Caco-2 (cell line): ENCODE measurements at regions of chr14 and their contacts with region 1.

Region 1: GRCh38 chr14:66918527-66918926 is 270.7 kb upstream of the GARIN2 start:
- DNase-seq: peak; percentile 40 to 50
- H3K4me3 ChIP-seq: no peak overlapping the region
- H3K4me3 Mint-ChIP-seq: no peak overlapping the region
- H3K27ac Mint-ChIP-seq: no peak overlapping the region
- H3K4me1 ChIP-seq: peaks cover 26% of the 10 kb centered on the region
- H3K4me1 Mint-ChIP-seq: peaks cover 16% of the 10 kb centered on the region
- H3K27me3 ChIP-seq: no peaks in the 10 kb centered on the region
- H3K27me3 Mint-ChIP-seq: no peaks in the 10 kb centered on the region
- CTCF ChIP-seq: no peak

Region 2: GRCh38 chr14:66152747-66153146 is 765.8 kb before region 1 on chr14:
- CTCF ChIA-PET with region 1: no interaction called
- POLR2A ChIA-PET with region 1: no interaction called
- intact Hi-C with region 1: no loop called
- DNase-seq: no peak
- H3K4me3 ChIP-seq: no peak overlapping the region
- H3K4me3 Mint-ChIP-seq: no peak overlapping the region
- H3K27ac Mint-ChIP-seq: no peak overlapping the region
- H3K4me1 ChIP-seq: no peaks in the 10 kb centered on the region
- H3K4me1 Mint-ChIP-seq: no peaks in the 10 kb centered on the region
- H3K27me3 ChIP-seq: no peaks in the 10 kb centered on the region
- H3K27me3 Mint-ChIP-seq: peaks cover 3% of the 10 kb centered on the region
- CTCF ChIP-seq: no peak

Region 3: GRCh38 chr14:66859063-66859671 is 59.4 kb before region 1 on chr14:
- CTCF ChIA-PET with region 1: no interaction called
- POLR2A ChIA-PET with region 1: no interaction called
- intact Hi-C with region 1: loop called (anchors 1 kb)
- DNase-seq: peak; percentile 55 to 74
- H3K4me3 ChIP-seq: no peak overlapping the region
- H3K4me3 Mint-ChIP-seq: peak overlapping the region; percentile 27
- H3K27ac Mint-ChIP-seq: peak overlapping the region; percentile 12
- H3K4me1 ChIP-seq: peaks cover 20% of the 10 kb centered on the region
- H3K4me1 Mint-ChIP-seq: peaks cover 19% of the 10 kb centered on the region
- H3K27me3 ChIP-seq: no peaks in the 10 kb centered on the region
- H3K27me3 Mint-ChIP-seq: no peaks in the 10 kb centered on the region
- CTCF ChIP-seq: no peak

Region 4: GRCh38 chr14:66932793-66933108 is 14.2 kb after region 1 on chr14:
- CTCF ChIA-PET with region 1: interaction called, 5 read pairs
- POLR2A ChIA-PET with region 1: no interaction called
- intact Hi-C with region 1: loop called (anchors 2 kb)
- DNase-seq: no peak
- H3K4me3 ChIP-seq: no peak overlapping the region
- H3K4me3 Mint-ChIP-seq: no peak overlapping the region
- H3K27ac Mint-ChIP-seq: peak overlapping the region; percentile 63
- H3K4me1 ChIP-seq: peaks cover 17% of the 10 kb centered on the region
- H3K4me1 Mint-ChIP-seq: peaks cover 13% of the 10 kb centered on the region
- H3K27me3 ChIP-seq: no peaks in the 10 kb centered on the region
- H3K27me3 Mint-ChIP-seq: no peaks in the 10 kb centered on the region
- CTCF ChIP-seq: no peak